IMR-90 (cell line): ENCODE measurements at regions of chr6 and their contacts with region 1.

Region 1: GRCh38 chr6:108113557-108114519 is 39.3 kb upstream of the OSTM1 start:
- DNase-seq: peak; percentile 48
- ATAC-seq: peak; percentile 81
- H3K4me3 ChIP-seq: no peak overlapping the region
- H3K27ac ChIP-seq: no peak overlapping the region
- H3K4me1 ChIP-seq: no peaks in the 10 kb centered on the region; the same call in 1 of the 2 replicates
- H3K27me3 ChIP-seq: peaks cover 80% of the 10 kb centered on the region
- CTCF ChIP-seq: peak; percentile 69
- POLR2A ChIP-seq: no peak
- RAD21 ChIP-seq: peak; percentile 73

Region 2: DNA sequence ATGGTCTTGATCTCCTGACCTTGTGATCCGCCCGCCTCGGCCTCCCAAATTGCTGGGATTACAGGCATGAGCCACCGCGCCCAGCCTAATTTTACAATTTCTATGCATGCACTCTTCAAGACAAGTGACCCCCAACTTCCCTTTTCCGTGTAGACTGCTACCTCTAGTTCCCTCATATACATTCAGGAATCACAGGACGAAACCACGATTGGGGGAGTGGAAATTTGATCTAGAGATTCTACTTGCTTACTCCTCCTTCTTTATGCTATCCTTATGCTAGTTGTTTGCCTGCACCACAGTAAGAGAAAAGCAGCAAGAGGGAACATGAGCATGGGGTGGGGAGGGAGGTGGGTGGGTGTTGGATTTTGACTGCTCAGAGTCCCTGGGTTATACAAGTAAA is 74.2 kb before region 1 on chr6:
- CTCF ChIA-PET with region 1: no interaction called
- POLR2A ChIA-PET with region 1: no interaction called
- dilution Hi-C with region 1: no loop called
- in situ Hi-C with region 1: no loop called
- intact Hi-C with region 1: no loop called
- DNase-seq: no peak
- ATAC-seq: no peak
- H3K4me3 ChIP-seq: no peak overlapping the region
- H3K27ac ChIP-seq: no peak overlapping the region
- H3K4me1 ChIP-seq: no peaks in the 10 kb centered on the region
- H3K27me3 ChIP-seq: no peaks in the 10 kb centered on the region
- CTCF ChIP-seq: no peak
- POLR2A ChIP-seq: no peak
- RAD21 ChIP-seq: no peak

Region 3: GRCh38 chr6:108052706-108053105 is 61.1 kb before region 1 on chr6:
- CTCF ChIA-PET with region 1: no interaction called
- POLR2A ChIA-PET with region 1: no interaction called
- dilution Hi-C with region 1: no loop called
- in situ Hi-C with region 1: no loop called
- intact Hi-C with region 1: no loop called
- DNase-seq: no peak
- ATAC-seq: no peak
- H3K4me3 ChIP-seq: no peak overlapping the region
- H3K27ac ChIP-seq: no peak overlapping the region
- H3K4me1 ChIP-seq: no peaks in the 10 kb centered on the region
- H3K27me3 ChIP-seq: no peaks in the 10 kb centered on the region
- CTCF ChIP-seq: no peak
- POLR2A ChIP-seq: no peak
- RAD21 ChIP-seq: no peak

Region 4: DNA sequence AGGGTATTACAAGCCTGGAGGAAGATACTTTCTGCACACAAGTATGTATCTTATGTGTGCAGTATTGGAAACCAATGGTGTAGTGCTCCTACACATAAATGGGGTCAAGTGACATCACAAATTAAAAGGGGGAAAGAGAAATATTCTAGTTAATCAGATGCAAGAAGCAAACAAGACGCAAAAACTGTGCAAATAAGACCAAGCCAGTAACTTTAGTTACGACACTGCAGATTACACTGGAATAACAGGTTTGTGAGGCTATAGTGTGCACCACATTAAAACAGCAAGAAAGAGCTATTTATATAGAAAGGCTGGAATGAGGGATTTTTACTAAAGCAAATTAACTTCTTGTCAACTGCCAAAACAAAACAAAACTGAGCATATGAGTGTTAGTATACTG is 97.8 kb after region 1 on chr6:
- CTCF ChIA-PET with region 1: no interaction called
- POLR2A ChIA-PET with region 1: no interaction called
- dilution Hi-C with region 1: no loop called
- in situ Hi-C with region 1: no loop called
- intact Hi-C with region 1: no loop called
- DNase-seq: no peak
- ATAC-seq: no peak
- H3K4me3 ChIP-seq: no peak overlapping the region
- H3K27ac ChIP-seq: no peak overlapping the region
- H3K4me1 ChIP-seq: no peaks in the 10 kb centered on the region
- H3K27me3 ChIP-seq: no peaks in the 10 kb centered on the region
- CTCF ChIP-seq: no peak
- POLR2A ChIP-seq: no peak
- RAD21 ChIP-seq: no peak

Region 5: DNA sequence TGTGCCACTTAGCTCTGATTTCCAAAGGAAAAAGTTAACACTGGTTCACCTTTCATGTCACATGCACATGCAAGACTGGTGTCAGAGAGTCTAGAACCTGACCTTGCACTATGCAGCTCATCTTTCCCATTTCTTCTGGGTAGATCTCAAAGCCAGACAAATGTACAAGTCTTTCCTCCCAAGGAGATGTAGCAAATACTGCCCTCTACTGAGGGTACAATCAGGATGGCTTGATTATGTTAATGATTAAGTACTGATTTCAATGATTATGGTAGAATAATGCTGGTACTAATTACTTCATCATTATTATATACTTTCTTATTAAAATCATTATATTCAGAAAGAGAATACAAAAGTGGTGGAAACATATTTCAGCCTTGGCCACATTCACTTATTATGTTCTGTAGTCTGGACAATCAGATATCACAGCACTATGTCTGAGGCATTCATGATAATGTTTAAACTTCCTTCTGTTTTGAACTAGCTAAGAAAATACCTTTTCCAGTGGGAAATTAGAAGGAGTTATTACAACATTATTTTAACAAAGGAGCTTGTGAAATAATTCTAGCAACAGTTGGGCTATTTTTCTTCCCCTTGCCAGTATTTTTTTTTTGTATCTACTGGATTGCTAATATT is 378.4 kb after region 1 on chr6:
- CTCF ChIA-PET with region 1: interaction called, 12 read pairs
- POLR2A ChIA-PET with region 1: no interaction called
- dilution Hi-C with region 1: no loop called
- in situ Hi-C with region 1: loop called (anchors 10 kb)
- intact Hi-C with region 1: loop called (anchors 1 kb)
- DNase-seq: peak; percentile 54
- ATAC-seq: peak; percentile 71
- H3K4me3 ChIP-seq: no peak overlapping the region
- H3K27ac ChIP-seq: no peak overlapping the region
- H3K4me1 ChIP-seq: no peaks in the 10 kb centered on the region
- H3K27me3 ChIP-seq: no peaks in the 10 kb centered on the region
- CTCF ChIP-seq: peak; percentile 68
- POLR2A ChIP-seq: no peak
- RAD21 ChIP-seq: peak; percentile 78

Region 6: GRCh38 chr6:108526739-108527174 is 412.9 kb after region 1 on chr6:
- CTCF ChIA-PET with region 1: interaction called, 4 read pairs
- POLR2A ChIA-PET with region 1: no interaction called
- dilution Hi-C with region 1: no loop called
- in situ Hi-C with region 1: loop called (anchors 5 kb)
- intact Hi-C with region 1: loop called (anchors 1 kb)
- DNase-seq: peak; percentile 62
- ATAC-seq: peak; percentile 63
- H3K4me3 ChIP-seq: no peak overlapping the region
- H3K27ac ChIP-seq: no peak overlapping the region
- H3K4me1 ChIP-seq: peaks cover 2% of the 10 kb centered on the region; the same call in 1 of the 2 replicates
- H3K27me3 ChIP-seq: peaks cover 11% of the 10 kb centered on the region
- CTCF ChIP-seq: peak; percentile 88
- POLR2A ChIP-seq: peak; percentile 33; the same call in 1 of the 2 replicates
- RAD21 ChIP-seq: peak; percentile 91